ENCODE measurements at regions of chr4 and their contacts with region 1.

Region 1: DNA sequence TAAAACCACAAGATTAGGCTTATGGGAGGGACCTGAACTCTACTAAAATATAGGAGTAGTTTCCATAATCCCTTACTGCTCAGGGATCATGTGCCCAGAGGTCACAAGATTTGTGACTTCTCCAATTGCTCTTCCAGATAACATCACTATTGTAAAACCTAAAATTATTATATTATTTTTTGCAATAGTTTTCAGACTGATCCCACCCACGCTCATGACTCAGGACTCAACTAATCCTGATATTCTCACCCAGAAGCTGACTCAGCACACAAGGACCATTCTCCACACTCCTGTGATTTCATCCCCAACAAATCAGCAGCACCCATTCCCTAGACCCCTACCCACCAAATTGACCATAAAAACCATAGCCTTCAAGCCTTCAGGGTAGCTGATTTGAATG is 24.0 kb upstream of the RPL34 start:
- DNase-seq: no peak

Region 2: GRCh38 chr4:108030332-108030731 is 566.0 kb before region 1 on chr4:
- intact Hi-C with region 1: loop called in 1 of 2 experiments (anchors 1 kb)
- DNase-seq: no peak

Region 3: GRCh38 chr4:108581083-108581482 is 15.3 kb before region 1 on chr4:
- intact Hi-C with region 1: no loop called
- DNase-seq: no peak